ENCODE measurements at regions of chr20 and their contacts with region 1.

Region 1: DNA sequence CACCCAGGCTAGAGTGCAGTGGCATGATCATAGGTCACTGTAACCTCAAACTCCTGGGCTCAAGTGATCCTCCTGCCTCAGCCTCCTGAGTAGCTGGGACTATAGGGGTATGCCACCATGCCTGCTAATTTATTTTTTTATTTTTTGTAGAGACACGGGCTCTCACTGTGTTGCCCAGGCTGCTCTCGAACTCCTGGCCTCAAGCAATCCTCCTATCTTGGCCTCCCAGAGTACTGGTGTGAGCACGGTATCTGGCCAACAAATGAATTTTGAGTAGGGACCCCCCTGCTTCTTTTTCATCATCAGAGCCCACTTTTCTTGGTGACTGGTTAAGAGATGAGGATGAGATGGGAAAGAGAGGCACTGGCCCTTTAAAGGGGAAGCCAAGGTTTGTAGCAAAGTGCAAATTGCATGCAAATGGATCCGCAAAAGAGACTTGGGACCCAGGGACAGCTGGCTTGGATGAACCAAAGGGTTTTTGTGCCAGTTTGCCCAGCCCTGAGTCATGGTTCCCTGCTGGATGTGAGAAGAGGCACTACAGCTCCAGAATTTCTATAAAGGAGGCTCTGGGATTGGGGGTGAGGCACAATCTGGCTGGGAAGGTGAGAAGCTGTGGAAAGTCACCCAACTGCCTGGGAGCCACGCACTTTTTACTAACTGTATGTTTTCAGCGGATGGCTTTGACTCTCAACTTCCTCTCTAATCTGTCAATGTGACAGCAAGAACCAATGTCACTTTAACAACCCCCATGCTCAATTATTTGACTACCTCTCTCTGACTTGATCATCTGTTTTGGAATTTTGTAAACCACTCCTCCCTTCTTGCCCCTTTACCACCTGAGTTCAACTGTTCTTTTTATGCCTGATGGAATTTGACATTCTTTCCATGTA is 58.7 kb upstream of the RNF24 start:
- DNase-seq: no peak
- ATAC-seq: no peak
- H3K4me3 Mint-ChIP-seq: no peak overlapping the region
- H3K27ac Mint-ChIP-seq: no peak overlapping the region
- H3K4me1 Mint-ChIP-seq: peaks cover 26% of the 10 kb centered on the region
- H3K27me3 Mint-ChIP-seq: no peaks in the 10 kb centered on the region; the same call in 1 of the 2 replicates
- CTCF ChIP-seq: no peak

Region 2: DNA sequence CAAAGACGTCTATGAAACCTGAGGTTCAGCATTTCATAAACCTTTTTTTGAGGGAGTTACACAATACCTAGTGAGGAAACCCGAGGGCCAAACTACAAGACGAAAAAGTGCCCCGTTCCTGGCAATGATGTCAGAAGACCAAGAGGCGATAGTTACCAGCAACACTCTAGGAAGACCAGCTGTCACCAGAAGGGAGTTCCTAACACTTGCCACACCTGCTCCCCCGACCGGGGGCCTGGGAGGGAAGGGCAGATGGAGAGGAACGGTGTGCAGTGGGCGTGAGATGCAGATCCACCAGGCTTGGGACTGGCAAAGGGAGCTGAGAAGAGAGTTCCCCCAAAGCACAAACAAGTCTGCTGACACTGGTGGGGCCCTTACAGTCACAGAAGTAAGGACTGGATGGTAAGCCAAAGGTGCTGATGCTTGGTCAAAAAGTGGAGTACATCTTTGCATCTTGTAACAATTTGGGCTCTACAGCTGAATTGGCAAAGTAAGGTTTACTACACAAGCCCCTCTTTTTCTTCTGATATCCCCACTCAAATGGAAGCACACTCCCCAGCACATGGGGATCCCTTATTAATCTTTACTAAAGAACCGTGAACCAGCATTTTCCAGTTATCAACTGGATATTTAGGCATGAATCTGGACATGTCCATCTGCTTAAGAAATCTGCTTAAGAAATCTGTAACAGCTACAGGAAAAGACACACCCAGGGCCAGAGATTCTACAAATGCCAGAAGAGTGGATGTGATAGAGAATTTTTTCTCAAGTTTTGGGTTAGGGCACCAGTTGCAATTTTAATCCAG is 146.4 kb before region 1 on chr20:
- CTCF ChIA-PET with region 1: interaction called, 55 read pairs
- POLR2A ChIA-PET with region 1: interaction called, 4 read pairs
- DNase-seq: no peak
- ATAC-seq: no peak; the same call in 1 of the 2 replicates
- H3K4me3 Mint-ChIP-seq: no peak overlapping the region
- H3K27ac Mint-ChIP-seq: peak overlapping the region; percentile 74
- H3K4me1 Mint-ChIP-seq: peaks cover 29% of the 10 kb centered on the region
- H3K27me3 Mint-ChIP-seq: no peaks in the 10 kb centered on the region
- CTCF ChIP-seq: no peak

Region 3: GRCh38 chr20:3970016-3970415 is 104.1 kb before region 1 on chr20:
- CTCF ChIA-PET with region 1: interaction called, 10 read pairs
- POLR2A ChIA-PET with region 1: no interaction called
- DNase-seq: no peak
- ATAC-seq: peak; percentile 78
- H3K4me3 Mint-ChIP-seq: no peak overlapping the region
- H3K27ac Mint-ChIP-seq: peak overlapping the region; percentile 10; the same call in 1 of the 2 replicates
- H3K4me1 Mint-ChIP-seq: peaks cover 16% of the 10 kb centered on the region
- H3K27me3 Mint-ChIP-seq: no peaks in the 10 kb centered on the region
- CTCF ChIP-seq: no peak

Region 4: DNA sequence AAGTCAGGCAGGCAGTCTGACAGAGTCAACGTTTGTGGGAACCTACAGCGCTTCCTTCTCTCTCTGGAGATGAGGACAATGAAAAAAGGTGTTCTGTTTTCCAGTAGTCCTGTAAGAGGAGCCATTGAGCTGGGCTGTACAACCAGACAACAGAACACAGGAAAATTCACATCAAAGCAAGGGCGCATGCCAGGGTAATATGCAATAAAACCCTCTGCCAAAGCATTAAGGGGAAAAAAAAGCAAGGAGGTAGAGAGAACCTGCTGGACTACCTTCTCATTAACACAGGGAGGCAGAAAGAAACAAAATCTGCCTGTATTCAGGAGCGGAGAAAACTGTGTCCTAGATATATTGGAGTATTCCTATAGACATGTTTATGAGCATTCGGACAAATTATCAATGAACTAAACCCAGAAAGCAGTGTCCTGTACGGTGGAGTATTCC is 60.0 kb before region 1 on chr20:
- CTCF ChIA-PET with region 1: interaction called, 19 read pairs
- POLR2A ChIA-PET with region 1: no interaction called
- DNase-seq: no peak
- ATAC-seq: no peak
- H3K4me3 Mint-ChIP-seq: peak overlapping the region; percentile 64
- H3K27ac Mint-ChIP-seq: no peak overlapping the region; the same call in 1 of the 2 replicates
- H3K4me1 Mint-ChIP-seq: peaks cover 38% of the 10 kb centered on the region
- H3K27me3 Mint-ChIP-seq: peaks cover 3% of the 10 kb centered on the region; the same call in 1 of the 2 replicates
- CTCF ChIP-seq: no peak

Region 5: DNA sequence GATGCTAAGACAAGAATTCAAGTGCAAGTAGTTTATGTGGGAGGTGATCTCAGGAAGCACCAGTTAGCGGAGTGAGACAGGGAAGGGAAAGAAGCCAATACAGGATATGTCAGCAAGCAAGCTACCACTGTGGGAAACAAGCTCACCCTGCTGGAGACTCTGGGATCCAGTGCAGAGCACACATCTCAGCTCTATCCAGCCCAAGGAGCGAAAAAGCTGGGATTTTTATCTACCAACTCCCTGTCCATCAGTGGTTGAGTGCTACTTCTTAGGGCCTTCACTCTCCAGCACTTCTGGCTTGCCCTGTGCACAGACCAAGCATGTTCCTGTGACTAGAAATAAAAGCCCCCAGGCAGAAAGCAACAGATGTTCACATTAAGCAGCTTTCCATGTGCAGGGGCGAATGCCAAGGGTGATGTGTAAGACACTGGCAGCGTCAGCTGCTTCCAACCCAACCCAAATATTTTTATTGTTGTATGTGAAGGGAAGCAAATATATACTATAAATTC is 48.0 kb before region 1 on chr20:
- CTCF ChIA-PET with region 1: interaction called, 18 read pairs
- POLR2A ChIA-PET with region 1: no interaction called
- DNase-seq: no peak
- ATAC-seq: peak; percentile 84
- H3K4me3 Mint-ChIP-seq: no peak overlapping the region
- H3K27ac Mint-ChIP-seq: no peak overlapping the region
- H3K4me1 Mint-ChIP-seq: peaks cover 43% of the 10 kb centered on the region
- H3K27me3 Mint-ChIP-seq: peaks cover 45% of the 10 kb centered on the region
- CTCF ChIP-seq: no peak

Region 6: GRCh38 chr20:4119854-4120209 is 45.7 kb after region 1 on chr20:
- CTCF ChIA-PET with region 1: no interaction called
- POLR2A ChIA-PET with region 1: no interaction called
- DNase-seq: no peak
- ATAC-seq: no peak
- H3K4me3 Mint-ChIP-seq: no peak overlapping the region
- H3K27ac Mint-ChIP-seq: no peak overlapping the region
- H3K4me1 Mint-ChIP-seq: peaks cover 8% of the 10 kb centered on the region; the same call in 1 of the 2 replicates
- H3K27me3 Mint-ChIP-seq: peaks cover 2% of the 10 kb centered on the region; the same call in 1 of the 2 replicates
- CTCF ChIP-seq: no peak

Region 7: DNA sequence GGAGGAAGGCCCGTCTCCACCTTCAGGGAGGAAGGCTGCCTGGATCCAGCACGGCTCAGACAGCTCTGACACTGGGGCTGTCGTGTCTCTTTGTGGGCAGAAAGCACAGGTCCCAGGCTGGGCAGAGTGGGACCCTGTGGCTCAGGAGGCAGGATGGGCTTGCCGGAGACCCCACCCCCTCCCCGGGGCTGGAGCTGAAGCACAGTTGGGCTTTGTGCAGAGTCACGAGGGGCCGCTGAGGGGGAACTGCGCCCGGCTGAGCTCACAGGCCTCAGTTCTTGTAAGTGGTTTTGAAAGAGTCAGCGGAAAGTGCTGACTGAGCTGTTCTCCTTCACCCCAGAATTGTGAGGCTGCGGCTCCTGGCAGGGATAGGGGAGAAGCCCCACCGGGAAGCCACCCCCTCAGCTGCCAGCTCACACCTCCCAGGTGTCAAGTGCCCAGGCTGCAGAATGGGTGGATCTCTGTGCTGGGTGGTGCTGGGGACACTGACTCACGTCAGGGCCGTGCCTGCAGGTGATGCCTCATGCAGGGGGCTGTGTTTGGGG is 86.7 kb after region 1 on chr20:
- CTCF ChIA-PET with region 1: no interaction called
- POLR2A ChIA-PET with region 1: no interaction called
- DNase-seq: peak; percentile 30
- ATAC-seq: peak; percentile 62
- H3K4me3 Mint-ChIP-seq: no peak overlapping the region
- H3K27ac Mint-ChIP-seq: peak overlapping the region; percentile 78; the same call in 1 of the 2 replicates
- H3K4me1 Mint-ChIP-seq: peaks cover 35% of the 10 kb centered on the region
- H3K27me3 Mint-ChIP-seq: no peaks in the 10 kb centered on the region
- CTCF ChIP-seq: no peak